ENCODE measurements at regions of chr3 and their contacts with region 1.

Region 1: DNA sequence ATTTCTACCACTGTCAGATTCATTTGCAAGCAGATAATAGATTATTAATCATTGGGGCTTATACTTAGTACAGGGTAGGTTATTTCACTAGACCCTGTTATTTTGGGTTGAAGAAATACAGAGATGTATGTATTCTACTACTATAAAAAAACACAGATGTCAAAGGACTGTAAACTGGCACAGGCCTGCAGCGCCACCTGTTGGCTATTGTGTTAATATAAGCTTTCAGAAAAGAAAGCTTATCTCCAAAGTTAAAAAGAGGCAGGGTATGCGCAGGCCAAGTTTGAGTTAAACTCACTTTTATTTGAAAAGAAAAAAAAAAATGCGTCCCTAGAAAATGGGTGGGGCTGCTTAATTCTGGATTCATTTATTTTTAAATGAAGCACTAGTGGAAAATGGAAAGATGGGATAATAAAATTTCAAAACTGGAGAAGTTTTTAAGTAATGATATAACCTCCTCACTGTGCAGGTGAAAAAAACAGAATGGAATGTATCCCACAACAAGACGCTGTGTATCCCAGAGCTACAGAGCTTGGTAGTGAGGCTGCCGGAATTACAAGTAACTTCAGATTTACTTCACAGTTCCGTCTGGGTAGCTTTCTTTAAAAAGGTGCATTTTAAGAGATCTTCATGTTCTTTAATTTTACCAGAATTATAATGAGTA is 407.2 kb upstream of the TGFBR2 start:
- DNase-seq: peak; percentile 19
- H3K27ac ChIP-seq: no peak overlapping the region
- CTCF ChIP-seq: peak; percentile 88

Region 2: DNA sequence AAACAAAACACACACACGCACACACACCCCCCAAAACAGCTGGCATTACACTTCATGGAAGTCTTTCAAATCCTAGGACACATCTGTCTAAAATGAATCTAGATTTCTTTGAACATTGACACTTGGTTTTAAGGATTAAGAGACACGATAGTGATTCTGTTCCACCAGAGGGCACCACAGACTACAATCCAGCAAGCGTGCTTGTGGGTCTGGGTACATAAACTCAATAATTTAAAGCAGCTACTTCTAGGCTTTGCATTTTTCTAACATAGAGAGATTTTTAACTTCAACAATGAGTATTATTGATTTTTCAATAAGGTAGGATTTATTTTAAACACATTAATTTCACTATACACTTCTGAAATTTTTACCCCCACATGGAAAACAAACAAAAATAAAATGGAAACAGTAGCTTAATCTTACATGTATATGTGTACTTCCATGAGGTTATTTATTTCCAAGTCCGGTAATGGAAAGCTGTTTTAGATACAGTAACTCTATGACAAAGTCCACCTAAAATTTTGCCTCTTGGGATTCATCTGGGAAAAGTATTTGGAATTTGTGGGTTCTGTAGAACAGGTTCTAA is 156.9 kb before region 1 on chr3:
- CTCF ChIA-PET with region 1: interaction called, 10 read pairs
- POLR2A ChIA-PET with region 1: no interaction called
- DNase-seq: peak; percentile 28
- H3K27ac ChIP-seq: no peak overlapping the region
- CTCF ChIP-seq: peak; percentile 80